ENCODE measurements at regions of chr2 and their contacts with region 1.

Region 1: GRCh38 chr2:179129574-179130238 is 79.8 kb upstream of the CCDC141 start:
- DNase-seq: no peak
- ATAC-seq: no peak
- H3K4me3 ChIP-seq: no peak overlapping the region
- H3K27ac ChIP-seq: no peak overlapping the region
- H3K4me1 ChIP-seq: peaks cover 0 to 5% (median 0%) of the 10 kb centered on the region in 9 donors
- H3K27me3 ChIP-seq: no peaks in the 10 kb centered on the region
- CTCF ChIP-seq: peak; percentile 31 to 80 (median 68)

Region 2: DNA sequence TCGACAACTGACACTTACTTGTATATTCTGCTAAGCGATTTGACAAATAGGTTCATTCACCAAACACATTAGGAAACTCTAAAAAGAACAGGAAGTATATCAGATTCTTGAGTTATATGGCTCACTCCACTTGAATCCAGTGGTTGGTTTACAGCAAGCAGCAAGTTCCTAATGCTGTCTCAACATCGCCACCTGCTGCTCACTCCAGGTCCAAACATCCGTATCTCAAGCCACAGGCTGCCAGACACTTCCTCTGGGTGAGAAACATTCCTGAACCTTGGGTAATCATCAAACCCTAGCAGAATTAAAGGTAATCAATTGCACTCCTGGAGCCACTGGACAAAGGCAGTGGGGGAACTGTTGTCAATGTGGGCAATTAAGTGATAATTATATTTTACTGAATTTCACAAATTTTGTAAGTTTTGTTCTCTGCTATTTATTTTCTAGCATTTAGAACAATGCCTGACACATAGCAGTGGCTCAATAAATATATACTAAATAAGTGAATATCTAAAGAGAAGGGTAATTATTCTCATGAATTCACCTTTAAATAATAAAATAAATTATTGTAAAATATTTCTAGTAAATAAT is 215.4 kb before region 1 on chr2:
- intact Hi-C with region 1: loop called in 1 of 10 experiments (anchors 10 kb)
- DNase-seq: peak; percentile 79 to 84
- ATAC-seq: peak; percentile 68 to 94 (median 82)
- H3K4me3 ChIP-seq: no peak overlapping the region
- H3K27ac ChIP-seq: no peak overlapping the region
- H3K4me1 ChIP-seq: peaks cover 0 to 25% (median 7%) of the 10 kb centered on the region in 9 donors
- H3K27me3 ChIP-seq: no peaks in the 10 kb centered on the region
- CTCF ChIP-seq: peak; percentile 67 to 93 (median 91)

Region 3: DNA sequence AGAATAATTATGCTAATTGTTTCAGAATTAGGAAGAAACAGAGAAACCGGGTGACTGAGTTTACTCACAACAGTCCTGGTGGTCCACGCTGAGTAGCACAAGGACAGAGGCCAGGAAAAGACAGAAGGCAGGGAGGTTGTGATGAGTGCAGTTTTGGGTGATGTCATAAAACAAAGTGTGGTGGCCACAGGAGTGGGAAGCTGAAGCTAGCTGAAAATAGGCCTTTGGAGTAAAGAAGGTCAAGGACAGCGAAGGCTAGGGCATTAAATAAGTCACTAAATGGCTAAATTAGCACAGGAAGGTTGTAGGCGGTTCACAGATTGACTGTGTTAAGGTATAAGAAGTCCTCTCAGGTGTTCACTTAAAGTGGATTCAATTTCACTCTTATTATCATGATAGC is 201.6 kb before region 1 on chr2:
- intact Hi-C with region 1: loop called in 1 of 10 experiments (anchors 10 kb)
- DNase-seq: no peak
- ATAC-seq: peak in 2 of 8 donors; percentile 34 to 52
- H3K4me3 ChIP-seq: no peak overlapping the region
- H3K27ac ChIP-seq: no peak overlapping the region
- H3K4me1 ChIP-seq: peaks cover 0 to 3% (median 0%) of the 10 kb centered on the region in 9 donors
- H3K27me3 ChIP-seq: no peaks in the 10 kb centered on the region
- CTCF ChIP-seq: no peak

Region 4: DNA sequence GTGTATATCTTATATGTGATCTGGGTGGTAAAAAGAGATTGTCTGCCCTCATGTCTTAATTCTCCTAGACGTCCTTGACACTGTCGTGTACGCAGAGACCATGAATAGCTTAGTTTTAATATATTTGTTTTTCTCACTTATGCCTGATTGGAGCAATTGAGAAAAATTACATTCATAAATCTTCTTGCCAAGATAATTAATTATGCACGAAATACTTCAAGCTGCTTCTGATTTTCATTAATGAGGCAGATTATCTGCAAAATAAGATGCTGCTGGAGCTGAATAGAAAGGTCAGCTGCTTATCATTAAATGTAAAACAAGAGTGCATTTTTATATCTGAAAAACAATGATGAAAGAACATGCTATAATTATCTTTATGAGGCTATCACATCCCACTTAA is 175.7 kb before region 1 on chr2:
- intact Hi-C with region 1: loop called in 2 of 10 experiments (anchors 10 kb)
- DNase-seq: no peak
- ATAC-seq: no peak
- H3K4me3 ChIP-seq: no peak overlapping the region
- H3K27ac ChIP-seq: no peak overlapping the region
- H3K4me1 ChIP-seq: peaks cover 0 to 13% (median 0%) of the 10 kb centered on the region in 9 donors
- H3K27me3 ChIP-seq: no peaks in the 10 kb centered on the region
- CTCF ChIP-seq: no peak

Region 5: DNA sequence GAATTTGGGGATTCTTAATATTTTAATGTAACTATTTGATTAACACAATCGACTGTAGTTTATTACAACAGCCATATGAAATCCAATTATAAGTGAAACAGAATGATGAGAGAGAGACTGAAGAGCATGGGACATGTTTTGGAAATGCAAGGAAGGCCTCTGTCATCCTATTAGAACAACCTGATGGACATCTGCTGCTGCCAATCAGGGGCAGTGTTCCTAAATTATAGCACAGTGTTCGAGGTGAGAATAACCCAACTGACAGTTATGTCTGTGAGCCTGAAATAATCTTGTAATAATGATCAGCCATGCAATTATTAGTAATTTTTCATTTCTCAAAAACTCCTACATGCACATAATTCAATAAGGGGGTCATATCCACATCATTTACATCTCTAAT is 153.4 kb before region 1 on chr2:
- intact Hi-C with region 1: loop called in 1 of 10 experiments (anchors 10 kb)
- DNase-seq: no peak
- ATAC-seq: no peak
- H3K4me3 ChIP-seq: no peak overlapping the region
- H3K27ac ChIP-seq: no peak overlapping the region
- H3K4me1 ChIP-seq: no peaks in the 10 kb centered on the region
- H3K27me3 ChIP-seq: no peaks in the 10 kb centered on the region
- CTCF ChIP-seq: no peak

Region 6: DNA sequence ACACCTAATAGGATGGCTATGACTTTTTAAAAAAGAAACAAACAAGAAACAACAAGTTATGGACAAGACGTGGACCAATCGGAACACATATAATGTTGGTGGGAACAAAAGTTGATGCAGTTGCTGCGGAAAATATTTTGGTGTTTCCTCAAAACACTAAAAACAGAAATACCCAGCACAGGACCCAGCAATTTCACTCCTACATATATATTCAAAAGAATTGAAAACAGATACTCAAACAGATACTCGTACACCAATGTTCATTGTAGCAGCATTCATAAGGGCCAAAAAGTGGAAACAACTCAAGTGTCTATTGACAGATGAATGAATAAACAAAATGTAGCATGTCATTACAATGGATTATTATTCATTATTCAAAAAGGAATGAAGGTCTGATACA is 91.9 kb before region 1 on chr2:
- intact Hi-C with region 1: loop called in 1 of 10 experiments (anchors 5 kb)
- DNase-seq: no peak
- ATAC-seq: no peak
- H3K4me3 ChIP-seq: no peak overlapping the region
- H3K27ac ChIP-seq: no peak overlapping the region
- H3K4me1 ChIP-seq: peaks cover 0 to 39% (median 5%) of the 10 kb centered on the region in 9 donors
- H3K27me3 ChIP-seq: no peaks in the 10 kb centered on the region
- CTCF ChIP-seq: no peak

Region 7: DNA sequence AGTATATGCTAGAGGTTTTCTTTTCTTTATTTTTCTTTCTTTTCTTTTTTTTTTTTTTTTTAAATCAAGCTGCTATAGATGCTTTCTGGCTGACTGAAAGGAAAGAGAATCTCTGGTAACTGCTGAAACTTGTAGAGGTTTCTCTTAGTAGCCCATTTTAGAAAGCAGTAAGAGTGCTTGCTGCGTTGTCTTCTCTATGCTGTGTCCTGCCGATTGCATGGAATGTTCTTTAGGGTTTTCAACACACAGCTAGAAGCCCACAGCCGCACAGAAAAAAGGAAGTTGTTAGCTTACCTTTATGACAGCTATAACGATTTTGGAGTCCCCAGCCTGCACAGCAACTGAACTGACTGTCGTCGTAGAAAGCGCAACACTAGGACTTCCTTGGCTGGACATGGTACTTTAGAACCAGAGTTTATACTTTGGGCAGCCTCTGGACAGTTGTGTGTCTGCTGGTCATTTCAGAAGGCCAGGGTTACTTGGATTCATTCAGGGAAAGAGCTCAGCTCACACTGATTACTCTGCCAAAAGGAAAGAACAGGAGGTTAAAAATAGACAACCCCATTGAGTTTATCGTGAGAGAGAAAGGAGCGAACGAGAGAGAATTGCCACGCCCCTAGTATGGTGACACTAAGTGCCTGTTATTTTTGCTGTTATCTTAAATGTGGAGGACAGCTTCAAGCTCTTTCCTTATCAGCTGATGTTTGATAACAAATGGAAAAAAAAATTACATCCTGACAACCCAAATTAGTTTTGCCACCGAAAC is 80.0 kb before region 1 on chr2 and contains the start of gene CCDC141:
- intact Hi-C with region 1: loop called in 2 of 10 experiments (anchors 10 kb)
- DNase-seq: peak in 1 of 2 donors; percentile 72
- ATAC-seq: peak; percentile 89 to 96 (median 94)
- H3K4me3 ChIP-seq: peak within 1 kb of the TSS; percentile 12 to 59 (median 52)
- H3K27ac ChIP-seq: peak within 1 kb of the TSS; percentile 66 to 91 (median 80)
- H3K4me1 ChIP-seq: peaks cover 4 to 42% (median 16%) of the 10 kb centered on the region in 9 donors
- H3K27me3 ChIP-seq: no peaks in the 10 kb centered on the region
- CTCF ChIP-seq: no peak
- total RNA-seq, gene CCDC141: 138 to 379 (median 236) TPM

Region 8: GRCh38 chr2:179165356-179166000 is 35.8 kb after region 1 on chr2:
- intact Hi-C with region 1: no loop called
- DNase-seq: no peak
- ATAC-seq: no peak
- H3K4me3 ChIP-seq: no peak overlapping the region
- H3K27ac ChIP-seq: no peak overlapping the region
- H3K4me1 ChIP-seq: no peaks in the 10 kb centered on the region
- H3K27me3 ChIP-seq: no peaks in the 10 kb centered on the region
- CTCF ChIP-seq: no peak

Region 9: GRCh38 chr2:179606141-179606540 is 476.4 kb after region 1 on chr2:
- intact Hi-C with region 1: no loop called
- DNase-seq: no peak
- ATAC-seq: no peak
- H3K4me3 ChIP-seq: no peak overlapping the region
- H3K27ac ChIP-seq: no peak overlapping the region
- H3K4me1 ChIP-seq: peaks cover 0 to 14% (median 0%) of the 10 kb centered on the region in 9 donors
- H3K27me3 ChIP-seq: no peaks in the 10 kb centered on the region
- CTCF ChIP-seq: no peak

Measured in heart right ventricle (tissue), 16 donors.